ENCODE measurements at regions of chr5 and their contacts with region 1.

Region 1: DNA sequence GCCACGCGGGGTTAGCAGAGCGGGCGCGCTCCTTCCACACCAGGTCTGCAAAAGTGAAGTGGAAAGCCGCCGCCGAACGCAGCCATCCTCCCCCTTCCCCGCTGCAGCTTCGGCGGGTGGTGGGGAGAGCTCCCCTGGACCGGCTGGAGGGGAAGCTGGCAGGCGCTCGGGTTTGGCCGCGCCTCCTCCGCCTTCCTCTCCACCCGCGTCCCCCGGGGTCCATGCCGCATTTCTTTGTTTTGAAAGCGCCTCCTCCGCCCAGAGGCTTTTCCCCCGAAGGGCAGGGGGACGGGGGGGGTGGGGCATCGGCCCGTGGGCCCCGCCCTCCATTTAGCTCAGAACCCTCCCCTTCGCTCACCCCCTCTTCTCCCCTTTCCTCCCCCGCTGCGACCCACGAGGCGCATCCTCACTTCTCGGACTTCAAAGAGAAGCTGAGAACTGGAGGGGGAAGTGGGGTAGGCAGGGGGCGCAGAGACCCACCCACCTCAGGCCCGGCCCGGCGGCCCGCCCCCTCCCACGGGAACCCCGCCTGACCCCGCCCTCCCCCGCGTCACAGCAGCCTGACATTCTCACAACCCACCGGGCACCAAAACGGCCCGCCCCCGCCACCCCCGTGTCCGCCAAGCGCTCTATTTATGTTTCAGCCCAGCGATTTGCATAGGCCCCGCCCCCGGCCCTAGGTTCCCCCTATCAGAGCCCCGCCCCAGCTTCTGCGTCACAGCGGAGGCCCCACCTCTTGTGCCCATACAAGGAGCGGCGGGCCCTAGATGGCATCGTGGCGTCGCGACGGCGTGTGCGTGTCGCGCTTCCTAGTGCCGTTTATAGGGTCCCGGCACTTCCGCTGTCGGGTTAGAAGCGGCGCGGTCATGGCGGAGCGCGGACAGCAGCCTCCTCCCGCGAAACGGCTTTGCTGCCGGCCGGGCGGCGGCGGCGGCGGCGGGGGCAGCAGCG is at the start of gene ZSWIM6:
- DNase-seq: peak; percentile 100
- ATAC-seq: peak; percentile 97
- total RNA-seq, gene ZSWIM6: 30.2 TPM

Region 2: DNA sequence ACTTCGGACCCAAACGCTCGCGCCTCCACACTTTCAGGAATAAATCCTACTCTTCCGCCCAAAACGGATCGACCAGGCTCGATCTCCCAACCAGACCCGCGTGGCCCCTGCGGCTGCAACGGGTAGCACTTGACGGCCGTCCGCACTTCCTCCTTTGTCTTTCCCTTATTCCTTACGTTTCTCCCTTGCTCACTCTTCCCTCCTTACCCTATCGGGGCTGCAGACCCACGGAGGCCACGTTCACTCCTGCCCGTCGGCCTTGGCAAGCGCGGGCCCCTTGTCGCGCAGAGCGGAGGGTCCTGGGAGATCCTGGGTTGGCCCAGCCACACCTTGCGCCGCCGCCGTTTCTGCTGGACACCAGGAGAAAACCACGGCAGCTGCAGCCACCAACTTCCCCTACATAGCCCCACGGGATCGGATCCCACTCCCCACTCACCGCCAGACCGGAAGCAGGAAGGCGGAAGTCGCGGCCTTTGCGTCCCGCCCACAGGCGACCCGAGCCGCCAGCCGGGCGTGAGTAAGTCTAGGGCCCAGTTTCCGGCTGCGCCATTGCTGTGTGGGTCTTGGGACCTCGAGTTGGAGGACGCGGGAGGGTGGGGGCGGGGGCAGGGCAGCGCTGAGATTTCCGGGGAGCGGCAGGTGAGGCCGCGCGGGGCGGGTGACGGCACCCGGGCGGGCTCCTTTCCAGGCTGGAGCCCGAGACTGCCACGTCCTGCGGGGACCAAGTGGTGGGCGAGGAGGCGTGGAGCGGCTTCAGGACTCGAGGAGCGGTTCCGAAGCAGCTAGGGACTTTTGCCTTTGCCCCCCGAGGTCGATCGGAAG is 169.5 kb before region 1 on chr5 and contains the start of gene SMIM15:
- intact Hi-C with region 1: loop called (anchors 10 kb)
- DNase-seq: peak; percentile 92
- ATAC-seq: peak; percentile 98
- total RNA-seq, gene SMIM15: 37.8 TPM

Region 3: DNA sequence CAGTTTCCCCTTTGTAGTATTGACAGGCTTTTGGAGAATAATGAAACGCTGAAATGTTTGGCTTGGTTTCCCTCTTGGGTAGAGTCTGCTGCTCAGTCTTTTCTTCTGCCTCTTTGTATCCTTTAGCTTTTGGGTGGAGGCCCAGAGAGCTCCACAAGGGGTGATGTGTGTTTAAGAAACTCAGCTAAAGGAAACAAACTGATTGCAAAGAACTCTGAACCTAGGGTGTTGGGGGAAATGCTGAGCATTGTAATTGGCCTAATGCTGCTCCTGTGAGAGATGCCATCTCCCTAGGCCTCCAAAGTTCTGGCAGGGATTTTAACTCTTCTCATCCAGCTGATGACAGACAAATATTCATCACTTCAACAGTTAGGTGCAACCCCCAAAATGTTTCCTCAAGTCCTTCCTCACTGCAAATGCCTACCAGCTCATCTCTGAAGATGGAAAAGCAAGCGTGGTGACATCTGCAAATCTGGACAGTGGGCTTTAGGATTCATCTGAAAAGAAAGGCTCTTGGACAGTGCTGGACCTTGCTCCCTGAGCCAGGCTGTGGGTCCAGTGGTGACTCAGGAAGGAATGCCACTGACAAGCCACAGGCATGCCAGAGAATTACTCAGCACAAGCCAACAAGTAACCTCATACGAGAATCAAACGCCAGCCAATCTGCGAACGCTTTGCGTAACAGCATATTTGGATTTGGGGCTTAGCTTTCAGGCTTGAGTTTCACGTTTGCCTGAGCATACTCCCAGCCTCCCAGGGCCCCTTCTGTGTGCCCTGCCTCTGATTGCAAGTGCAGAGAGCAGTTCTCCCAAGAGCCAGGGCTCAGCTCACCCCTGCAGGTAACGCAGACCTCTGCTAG is 30.1 kb before region 1 on chr5:
- intact Hi-C with region 1: no loop called
- DNase-seq: no peak
- ATAC-seq: peak; percentile 91

Region 4: GRCh38 chr5:61394078-61394704 is 62.5 kb after region 1 on chr5:
- intact Hi-C with region 1: loop called (anchors 10 kb)
- DNase-seq: no peak
- ATAC-seq: no peak

Region 5: GRCh38 chr5:61658592-61659008 is 326.9 kb after region 1 on chr5:
- intact Hi-C with region 1: loop called (anchors 10 kb)
- DNase-seq: peak; percentile 94
- ATAC-seq: peak; percentile 84